Posterior vena cava (tissue), 2 donors: ENCODE measurements at regions of chr2 and their contacts with region 1.

Region 1: DNA sequence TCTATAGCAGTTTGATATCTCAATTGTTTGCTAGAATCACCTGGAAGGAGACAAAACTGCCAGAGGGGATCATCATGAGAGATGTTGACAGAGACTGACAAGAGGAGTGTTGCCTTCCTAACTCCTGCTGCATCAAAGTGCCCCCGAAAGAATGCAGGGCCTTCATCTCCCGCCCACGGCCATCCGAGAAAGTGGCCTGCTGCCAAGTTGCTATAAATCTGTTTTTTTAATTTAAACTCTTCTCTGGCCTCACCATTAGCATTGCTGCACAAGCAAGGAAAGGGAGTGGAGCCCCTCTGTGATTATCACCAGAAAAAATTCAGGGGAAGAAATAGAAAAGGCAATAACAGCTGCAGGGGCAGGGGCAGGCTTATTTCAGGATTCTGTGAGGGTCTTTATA is 238.1 kb upstream of the EPHA4 start:
- DNase-seq: no peak

Region 2: GRCh38 chr2:221778025-221778424 is 32.2 kb before region 1 on chr2:
- intact Hi-C with region 1: loop called in 1 of 2 experiments (anchors 1 kb)
- DNase-seq: no peak

Region 3: GRCh38 chr2:222017252-222017850 is 207.1 kb after region 1 on chr2:
- intact Hi-C with region 1: no loop called
- DNase-seq: no peak